ENCODE measurements at regions of chr16 and their contacts with region 1.

Region 1: DNA sequence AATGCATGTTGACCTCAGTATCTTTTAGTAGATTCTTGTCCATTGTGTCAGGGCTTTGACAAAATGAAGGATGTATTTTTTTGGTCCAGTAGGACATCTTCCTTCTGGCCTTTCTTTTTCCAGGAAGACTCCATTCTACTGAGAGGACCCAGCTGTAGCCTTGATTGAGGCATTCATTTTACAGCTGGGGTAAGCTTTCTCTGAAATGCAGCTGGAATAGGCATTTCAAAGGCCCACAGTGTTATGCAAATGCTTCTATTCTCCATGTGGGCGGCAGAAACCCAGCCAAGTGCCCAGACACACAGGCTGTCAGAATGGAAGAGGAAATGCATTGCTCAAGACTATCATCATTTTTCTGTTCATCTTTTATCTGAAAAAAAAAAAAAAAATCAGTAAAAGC is 629.0 kb upstream of the CDH8 start:
- DNase-seq: no peak
- ATAC-seq: no peak
- H3K4me3 Mint-ChIP-seq: no peak overlapping the region
- H3K27ac Mint-ChIP-seq: no peak overlapping the region
- H3K4me1 Mint-ChIP-seq: no peaks in the 10 kb centered on the region
- H3K27me3 Mint-ChIP-seq: no peaks in the 10 kb centered on the region
- CTCF ChIP-seq: no peak

Region 2: DNA sequence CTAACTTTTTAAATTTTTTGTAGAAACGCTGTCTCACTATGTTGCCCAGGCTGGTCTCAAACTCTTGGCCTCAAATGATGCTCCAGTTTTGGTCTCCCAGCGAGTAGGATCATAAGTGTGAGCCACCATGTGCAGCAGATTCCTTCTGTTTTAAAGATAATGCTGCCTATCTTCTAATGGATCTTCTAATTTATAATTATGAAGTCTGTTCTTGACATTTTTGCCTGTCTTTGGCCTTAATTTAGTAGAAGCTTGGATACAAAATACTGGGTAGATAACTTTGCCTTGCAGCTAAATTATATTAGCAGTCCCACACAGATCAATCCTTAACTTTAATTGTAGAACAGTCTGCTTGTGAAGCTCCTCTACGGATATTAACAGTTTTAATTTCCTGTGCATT is 62.5 kb before region 1 on chr16:
- CTCF ChIA-PET with region 1: no interaction called
- POLR2A ChIA-PET with region 1: no interaction called
- intact Hi-C with region 1: loop called (anchors 10 kb)
- DNase-seq: no peak
- ATAC-seq: no peak
- H3K4me3 Mint-ChIP-seq: no peak overlapping the region
- H3K27ac Mint-ChIP-seq: no peak overlapping the region
- H3K4me1 Mint-ChIP-seq: no peaks in the 10 kb centered on the region
- H3K27me3 Mint-ChIP-seq: no peaks in the 10 kb centered on the region
- CTCF ChIP-seq: no peak